Dorsolateral prefrontal cortex (tissue), 120 donors: ENCODE measurements at regions of chr10 and their contacts with region 1.

Region 1: GRCh38 chr10:44932517-44933450 is 21.6 kb downstream of the TMEM72 start:
- DNase-seq: peak; percentile 86 to 96 (median 92)
- H3K4me3 ChIP-seq: no peak overlapping the region
- H3K27ac ChIP-seq: peak overlapping the region in 38 of 59 donors; percentile 2 to 77 (median 50)
- H3K27me3 ChIP-seq: no peaks in the 10 kb centered on the region
- CTCF ChIP-seq: peak; percentile 89 to 100 (median 98)

Region 2: GRCh38 chr10:44879531-44879899 is 53.3 kb before region 1 on chr10:
- intact Hi-C with region 1: no loop called
- DNase-seq: peak in 4 of 10 donors; percentile 21 to 55 (median 51)
- H3K4me3 ChIP-seq: peak overlapping the region in 57 of 59 donors; percentile 43 to 73 (median 59)
- H3K27ac ChIP-seq: peak overlapping the region in 57 of 59 donors; percentile 5 to 93 (median 78)
- H3K27me3 ChIP-seq: no peaks in the 10 kb centered on the region
- CTCF ChIP-seq: no peak

Region 3: DNA sequence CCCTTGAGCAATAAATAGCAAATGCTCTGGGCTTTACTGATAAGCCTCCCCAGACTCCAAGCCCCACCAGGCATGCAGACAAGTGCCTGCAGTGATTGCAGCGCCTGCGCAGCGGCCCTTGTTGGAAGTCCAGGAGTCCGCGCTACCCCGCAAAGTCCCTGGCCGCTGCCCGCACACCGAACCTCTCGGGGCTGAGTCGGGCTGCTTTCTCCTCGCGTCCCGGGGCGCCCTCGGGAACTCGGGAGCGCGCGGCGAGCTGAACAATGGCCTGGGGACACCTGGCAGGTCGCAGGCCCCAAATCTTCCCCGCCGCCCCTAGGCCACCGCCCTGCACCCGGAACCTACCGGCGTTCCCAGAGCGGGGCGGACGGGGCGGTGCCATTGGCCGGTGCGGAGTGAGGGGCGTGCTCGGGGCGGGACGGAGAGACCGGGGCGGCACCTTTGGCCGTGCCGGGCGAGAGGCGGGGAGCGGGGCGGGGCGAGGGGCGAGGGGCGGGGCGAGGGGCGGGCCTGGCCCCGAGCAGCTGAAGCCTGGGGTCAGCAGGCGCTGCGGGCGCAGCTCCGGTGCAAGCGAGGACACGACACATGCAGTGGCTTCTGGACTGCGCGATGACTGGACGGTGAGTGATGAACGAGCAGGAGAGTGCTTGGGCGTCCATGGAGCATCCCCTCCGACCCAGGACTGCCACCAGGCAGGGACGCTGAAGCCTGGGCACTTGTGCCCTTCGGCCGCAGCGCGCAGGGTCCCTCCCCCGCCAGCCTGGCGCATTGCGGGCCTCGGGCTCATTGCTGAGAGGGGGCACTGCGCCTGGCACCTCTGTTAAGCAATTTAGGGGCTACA is 26.7 kb after region 1 on chr10 and contains the start of gene RASSF4:
- intact Hi-C with region 1: loop called in 1 of 2 experiments (anchors 2 kb)
- DNase-seq: peak; percentile 79 to 97 (median 87)
- H3K4me3 ChIP-seq: peak within 1 kb of the TSS; percentile 60 to 99 (median 90)
- H3K27ac ChIP-seq: peak within 1 kb of the TSS; percentile 59 to 99 (median 97)
- H3K27me3 ChIP-seq: no peaks in the 10 kb centered on the region
- CTCF ChIP-seq: peak in 20 of 56 donors; percentile 3 to 51 (median 15)
- total RNA-seq, gene RASSF4: 54.6 to 175 (median 111) TPM

Region 4: GRCh38 chr10:44974628-44975431 is 42.0 kb after region 1 on chr10:
- intact Hi-C with region 1: loop called (anchors 1 kb)
- DNase-seq: peak in 5 of 10 donors; percentile 54 to 85 (median 70)
- H3K4me3 ChIP-seq: peak overlapping the region in 58 of 59 donors; percentile 5 to 71 (median 46)
- H3K27ac ChIP-seq: peak overlapping the region; percentile 39 to 97 (median 86)
- H3K27me3 ChIP-seq: no peaks in the 10 kb centered on the region
- CTCF ChIP-seq: peak; percentile 86 to 99 (median 98)

Region 5: DNA sequence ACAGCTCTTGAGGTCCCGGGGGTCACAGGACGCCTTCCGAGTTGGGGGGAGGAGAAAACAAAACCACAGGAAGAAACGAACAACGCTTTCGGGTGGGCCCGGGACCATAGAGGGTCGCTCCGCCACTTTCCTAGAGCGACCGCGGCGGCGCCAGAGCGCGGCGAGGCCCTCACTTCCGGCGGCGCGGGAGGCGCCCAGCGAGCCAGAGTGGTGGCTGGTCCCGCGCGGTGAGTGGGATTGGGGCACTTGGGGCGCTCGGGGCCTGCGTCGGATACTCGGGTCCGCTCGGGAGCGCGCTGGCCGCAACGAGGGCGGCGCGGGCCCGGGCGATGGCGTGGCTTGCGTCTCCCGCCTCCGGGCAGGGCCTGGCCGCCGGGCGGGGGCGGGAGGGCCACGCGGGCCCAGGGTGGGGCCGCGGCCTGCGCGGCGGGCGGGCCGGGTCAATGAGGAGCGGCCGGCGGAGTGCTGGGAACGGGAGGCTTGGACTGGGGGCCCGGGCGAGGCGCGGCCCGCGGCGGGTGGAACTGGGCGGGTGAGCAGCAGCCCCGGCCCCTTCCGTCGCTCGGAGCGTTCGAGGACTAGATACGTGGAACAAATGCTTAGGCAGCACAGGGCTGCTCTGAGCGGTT is 68.1 kb after region 1 on chr10 and contains the start of gene ZNF22:
- intact Hi-C with region 1: loop called in 1 of 2 experiments (anchors 2 kb)
- DNase-seq: peak in 6 of 10 donors; percentile 58 to 82 (median 68)
- H3K4me3 ChIP-seq: peak within 1 kb of the TSS; percentile 48 to 84 (median 74)
- H3K27ac ChIP-seq: peak within 1 kb of the TSS; percentile 39 to 98 (median 88)
- H3K27me3 ChIP-seq: no peaks in the 10 kb centered on the region
- CTCF ChIP-seq: peak in 35 of 56 donors; percentile 12 to 46 (median 29)
- total RNA-seq, gene ZNF22: 9.2 to 20.9 (median 14.1) TPM